Activated CD8-positive, alpha-beta T cell treated with anti-CD3 and anti-CD28 coated beads for 36 hours (primary cell): ENCODE measurements at regions of chr1 and their contacts with region 1.

Region 1: DNA sequence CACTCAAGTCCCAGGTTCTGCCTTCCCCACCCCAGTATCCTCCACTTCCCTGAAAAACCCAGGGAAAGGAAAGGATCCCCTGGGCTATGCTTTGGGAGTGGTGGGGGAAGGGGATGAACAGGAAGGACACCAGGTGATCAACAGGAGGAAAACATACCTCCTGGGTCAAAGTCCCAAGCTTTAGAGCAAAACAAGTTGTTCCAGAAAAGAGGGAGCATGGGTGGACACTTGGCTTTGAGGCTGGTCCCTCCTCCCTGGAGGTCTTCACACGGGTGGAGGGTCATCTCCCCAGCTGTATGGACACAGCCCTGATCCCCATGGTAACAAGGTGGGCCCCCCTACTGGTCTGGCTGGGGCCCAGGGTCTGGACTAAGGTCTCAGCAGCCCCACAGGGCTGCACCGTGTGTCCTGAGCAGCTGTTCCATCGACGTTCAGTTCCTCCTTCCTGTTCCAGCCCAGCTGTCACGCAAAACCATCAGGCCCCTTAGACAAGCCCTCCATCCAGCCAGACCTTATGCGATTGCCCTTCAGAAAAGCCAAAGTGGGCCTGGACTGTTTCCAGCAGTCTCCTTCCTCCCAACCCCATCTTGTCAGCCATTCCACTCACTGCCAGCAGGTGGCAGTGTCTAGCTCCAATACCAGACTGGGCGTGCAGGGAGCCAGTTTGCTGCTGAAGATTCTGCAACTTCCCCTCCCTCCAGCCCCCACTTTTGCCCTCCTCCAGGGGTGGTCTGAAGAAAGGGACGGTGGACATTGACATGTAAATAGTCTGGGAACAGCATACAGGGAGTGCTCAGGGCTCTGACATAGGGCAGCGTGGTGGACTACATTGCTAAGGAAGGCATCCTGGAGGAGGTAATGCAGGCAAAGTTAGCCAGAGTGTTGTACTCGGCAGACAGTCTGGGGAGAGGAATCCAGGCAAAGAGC is 2.9 kb upstream of the PDZK1IP1 start:
- DNase-seq: peak; percentile 79
- ATAC-seq: peak; percentile 94
- H3K4me3 Mint-ChIP-seq: no peak overlapping the region
- H3K27ac Mint-ChIP-seq: no peak overlapping the region
- H3K4me1 Mint-ChIP-seq: no peaks in the 10 kb centered on the region
- H3K27me3 Mint-ChIP-seq: peaks cover 3% of the 10 kb centered on the region
- CTCF ChIP-seq: peak; percentile 90

Region 2: DNA sequence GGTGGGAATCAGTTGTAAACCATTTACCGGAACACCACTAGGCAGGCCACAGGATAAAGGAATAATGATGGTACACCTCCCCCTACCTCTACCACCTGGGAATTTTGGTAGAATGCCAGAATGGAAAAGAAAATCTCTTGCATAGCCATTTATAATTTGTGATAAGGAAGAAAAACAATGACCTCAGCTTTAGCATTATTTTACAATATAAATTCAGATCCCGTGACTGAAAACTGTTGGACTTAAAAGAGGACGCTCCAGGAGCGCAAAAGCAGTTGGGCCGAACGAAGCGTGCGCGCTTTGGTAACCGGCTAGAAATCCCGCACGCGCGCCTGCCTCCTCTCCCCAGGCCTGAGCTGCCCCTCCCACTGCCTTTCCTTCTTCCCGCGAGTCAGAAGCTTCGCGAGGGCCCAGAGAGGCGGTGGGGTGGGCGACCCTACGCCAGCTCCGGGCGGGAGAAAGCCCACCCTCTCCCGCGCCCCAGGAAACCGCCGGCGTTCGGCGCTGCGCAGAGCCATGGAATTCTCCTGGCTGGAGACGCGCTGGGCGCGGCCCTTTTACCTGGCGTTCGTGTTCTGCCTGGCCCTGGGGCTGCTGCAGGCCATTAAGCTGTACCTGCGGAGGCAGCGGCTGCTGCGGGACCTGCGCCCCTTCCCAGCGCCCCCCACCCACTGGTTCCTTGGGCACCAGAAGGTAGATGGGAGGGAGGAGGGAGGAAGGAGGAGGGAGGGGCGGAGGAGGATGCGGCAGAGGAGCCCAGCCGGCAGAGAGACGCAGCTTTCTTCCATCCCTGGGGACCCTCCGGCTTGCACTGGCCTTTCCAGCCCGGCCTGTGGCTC is 169.2 kb before region 1 on chr1 and contains the start of gene CYP4X1:
- CTCF ChIA-PET with region 1: no interaction called
- POLR2A ChIA-PET with region 1: no interaction called
- intact Hi-C with region 1: no loop called
- DNase-seq: no peak
- ATAC-seq: no peak
- H3K4me3 Mint-ChIP-seq: no peak within 1 kb of the TSS
- H3K27ac Mint-ChIP-seq: no peak within 1 kb of the TSS
- H3K4me1 Mint-ChIP-seq: no peaks in the 10 kb centered on the region
- H3K27me3 Mint-ChIP-seq: peaks cover 22% of the 10 kb centered on the region
- CTCF ChIP-seq: no peak
- total RNA-seq, gene CYP4X1: not detected

Region 3: GRCh38 chr1:47179017-47179987 is 13.4 kb before region 1 on chr1:
- CTCF ChIA-PET with region 1: interaction called, 61 read pairs
- POLR2A ChIA-PET with region 1: interaction called, 4 read pairs
- intact Hi-C with region 1: no loop called
- DNase-seq: peak; percentile 91
- ATAC-seq: peak; percentile 88
- H3K4me3 Mint-ChIP-seq: peak overlapping the region; percentile 61
- H3K27ac Mint-ChIP-seq: peak overlapping the region; percentile 68
- H3K4me1 Mint-ChIP-seq: peaks cover 8% of the 10 kb centered on the region
- H3K27me3 Mint-ChIP-seq: peaks cover 22% of the 10 kb centered on the region
- CTCF ChIP-seq: peak; percentile 82

Region 4: DNA sequence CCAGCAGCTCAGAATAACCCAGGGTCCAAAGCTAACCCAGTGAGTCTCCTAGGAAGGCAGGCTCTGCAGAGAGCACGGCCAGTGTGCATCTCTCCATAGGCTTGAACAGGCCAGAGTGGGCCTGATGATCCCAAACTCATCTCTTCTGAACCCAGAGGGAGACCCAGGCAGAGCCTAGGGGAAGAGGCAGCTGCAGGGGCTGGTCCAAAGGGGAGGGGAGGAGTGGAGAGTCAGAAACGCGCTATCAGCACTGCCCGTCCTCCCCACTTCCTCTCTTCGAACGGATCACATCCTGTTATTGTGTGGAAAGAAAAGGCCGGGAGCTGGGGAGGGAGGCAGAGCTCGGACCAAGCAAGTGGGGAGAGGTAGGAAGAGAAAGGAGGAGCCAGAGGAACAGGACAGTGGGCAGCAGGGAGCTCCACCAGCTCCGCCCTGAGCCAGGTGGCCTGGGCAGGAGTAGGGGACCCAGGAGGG is 19.1 kb after region 1 on chr1:
- CTCF ChIA-PET with region 1: interaction called, 10 read pairs
- POLR2A ChIA-PET with region 1: no interaction called
- intact Hi-C with region 1: no loop called
- DNase-seq: no peak
- ATAC-seq: no peak
- H3K4me3 Mint-ChIP-seq: no peak overlapping the region
- H3K27ac Mint-ChIP-seq: no peak overlapping the region
- H3K4me1 Mint-ChIP-seq: no peaks in the 10 kb centered on the region
- H3K27me3 Mint-ChIP-seq: no peaks in the 10 kb centered on the region
- CTCF ChIP-seq: no peak

Region 5: GRCh38 chr1:47219590-47220220 is 27.0 kb after region 1 on chr1:
- CTCF ChIA-PET with region 1: interaction called, 10 read pairs
- POLR2A ChIA-PET with region 1: no interaction called
- intact Hi-C with region 1: no loop called
- DNase-seq: no peak
- ATAC-seq: no peak
- H3K4me3 Mint-ChIP-seq: no peak overlapping the region
- H3K27ac Mint-ChIP-seq: no peak overlapping the region
- H3K4me1 Mint-ChIP-seq: no peaks in the 10 kb centered on the region
- H3K27me3 Mint-ChIP-seq: peaks cover 7% of the 10 kb centered on the region
- CTCF ChIP-seq: no peak

Region 6: GRCh38 chr1:47262787-47263413 is 70.2 kb after region 1 on chr1:
- CTCF ChIA-PET with region 1: interaction called, 86 read pairs
- POLR2A ChIA-PET with region 1: interaction called, 4 read pairs
- intact Hi-C with region 1: no loop called
- DNase-seq: peak; percentile 63
- ATAC-seq: peak; percentile 34
- H3K4me3 Mint-ChIP-seq: no peak overlapping the region
- H3K27ac Mint-ChIP-seq: no peak overlapping the region
- H3K4me1 Mint-ChIP-seq: no peaks in the 10 kb centered on the region
- H3K27me3 Mint-ChIP-seq: no peaks in the 10 kb centered on the region
- CTCF ChIP-seq: peak; percentile 66

Region 7: GRCh38 chr1:47333922-47334764 is 141.4 kb after region 1 on chr1:
- CTCF ChIA-PET with region 1: interaction called, 10 read pairs
- POLR2A ChIA-PET with region 1: no interaction called
- intact Hi-C with region 1: no loop called
- DNase-seq: peak; percentile 79
- ATAC-seq: peak; percentile 90
- H3K4me3 Mint-ChIP-seq: no peak overlapping the region
- H3K27ac Mint-ChIP-seq: peak overlapping the region; percentile 97
- H3K4me1 Mint-ChIP-seq: peaks cover 21% of the 10 kb centered on the region
- H3K27me3 Mint-ChIP-seq: no peaks in the 10 kb centered on the region
- CTCF ChIP-seq: no peak